ENCODE measurements at regions of chr12 and their contacts with region 1.

Region 1: GRCh38 chr12:132506328-132507160 is 16.6 kb downstream of the FBRSL1 start:
- DNase-seq: peak; percentile 32 to 75 (median 69)
- H3K4me3 ChIP-seq: peak overlapping the region in 5 of 7 experiments; percentile 34 to 72 (median 58)
- H3K27ac ChIP-seq: peak overlapping the region; percentile 54 to 68
- H3K4me1 ChIP-seq: peaks cover 0 to 68% (median 60%) of the 10 kb centered on the region in 4 experiments
- H3K27me3 ChIP-seq: peaks cover 0 to 26% (median 0%) of the 10 kb centered on the region in 5 experiments

Region 2: DNA sequence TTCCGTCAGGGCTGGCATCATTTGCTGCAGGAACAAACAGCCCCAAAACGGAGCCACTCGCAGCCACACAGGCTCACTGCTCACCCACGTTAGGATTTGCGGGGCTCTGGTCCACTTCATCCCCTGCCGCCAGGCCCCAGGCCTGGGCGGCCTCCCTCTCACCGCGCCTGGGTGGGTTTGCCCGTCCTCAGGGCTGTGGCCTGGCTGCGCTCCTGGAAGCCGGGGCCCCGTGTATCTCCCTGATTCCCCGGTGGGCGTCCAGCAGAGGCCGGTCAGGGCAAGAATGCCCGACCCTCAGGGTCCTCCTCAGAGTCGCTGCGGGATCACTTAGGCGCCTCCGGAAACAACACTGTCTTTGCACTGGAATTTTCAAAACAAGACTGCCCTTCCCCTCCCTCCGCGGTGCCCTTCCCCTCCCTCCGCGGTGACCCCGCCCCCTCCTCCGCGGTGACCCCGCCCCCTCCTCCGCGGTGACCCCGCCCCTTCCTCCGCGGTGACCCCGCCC is 32.3 kb before region 1 on chr12:
- CTCF ChIA-PET with region 1: no interaction called
- POLR2A ChIA-PET with region 1: no interaction called
- DNase-seq: no peak
- H3K4me3 ChIP-seq: peak overlapping the region in 2 of 7 experiments; percentile 30 to 70
- H3K27ac ChIP-seq: no peak overlapping the region
- H3K4me1 ChIP-seq: peaks cover under 1 to 53% (median 43%) of the 10 kb centered on the region in 4 experiments
- H3K27me3 ChIP-seq: no peaks in the 10 kb centered on the region

Region 3: GRCh38 chr12:132523576-132524331 is 17.2 kb after region 1 on chr12:
- CTCF ChIA-PET with region 1: interaction called, 17 read pairs
- POLR2A ChIA-PET with region 1: no interaction called
- DNase-seq: peak; percentile 49 to 74 (median 66)
- H3K4me3 ChIP-seq: no peak overlapping the region
- H3K27ac ChIP-seq: no peak overlapping the region
- H3K4me1 ChIP-seq: peaks cover 0 to 6% (median 3%) of the 10 kb centered on the region in 4 experiments
- H3K27me3 ChIP-seq: no peaks in the 10 kb centered on the region

Measured in common myeloid progenitor, CD34-positive (primary cell).